Activated naive CD4-positive, alpha-beta T cell treated with anti-CD3 and anti-CD28 coated beads for 36 hours (primary cell): ENCODE measurements at regions of chr1 and their contacts with region 1.

Region 1: DNA sequence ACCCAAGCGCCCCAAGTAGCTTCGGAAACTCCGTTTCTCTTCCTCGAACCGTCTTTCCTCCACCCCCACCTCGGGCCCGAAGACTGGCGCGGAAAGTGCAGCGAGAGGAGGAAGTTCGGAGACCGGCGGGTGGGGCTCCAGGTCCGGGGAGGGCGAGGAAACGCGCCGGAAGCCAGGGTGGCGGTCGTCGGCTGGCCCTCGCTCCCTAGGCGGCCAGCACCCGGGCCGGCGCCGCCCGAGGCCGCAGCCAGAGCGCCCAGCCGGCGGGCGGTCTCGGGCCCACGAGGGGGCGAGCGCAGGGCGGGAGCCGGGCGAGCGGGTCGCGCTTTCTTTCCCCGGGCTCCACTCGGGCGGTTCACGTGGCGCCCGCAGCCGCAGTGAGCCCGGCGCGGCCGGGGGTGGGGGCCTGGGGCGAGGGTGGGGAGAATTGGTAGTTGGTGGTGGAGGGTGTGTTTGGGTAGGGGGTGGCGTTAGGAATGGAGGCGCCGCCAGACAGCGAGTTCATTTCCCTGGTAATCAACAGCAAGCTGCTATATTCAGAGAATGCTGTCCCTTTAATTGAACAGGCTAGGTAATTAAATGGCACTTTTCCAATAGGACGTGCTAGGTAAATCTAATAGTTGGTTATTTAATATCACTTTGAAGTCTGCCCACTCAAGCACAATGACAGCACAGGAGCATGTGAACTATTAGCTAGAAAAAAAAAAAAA is 6.7 kb downstream of the LMO4 start:
- DNase-seq: peak; percentile 69
- H3K4me3 Mint-ChIP-seq: peak overlapping the region; percentile 72
- H3K27ac Mint-ChIP-seq: peak overlapping the region; percentile 76
- H3K4me1 Mint-ChIP-seq: peaks cover 46% of the 10 kb centered on the region
- H3K27me3 Mint-ChIP-seq: peaks cover 27% of the 10 kb centered on the region

Region 2: GRCh38 chr1:86866665-86867064 is 468.7 kb before region 1 on chr1:
- CTCF ChIA-PET with region 1: no interaction called
- intact Hi-C with region 1: no loop called
- DNase-seq: no peak
- H3K4me3 Mint-ChIP-seq: no peak overlapping the region
- H3K27ac Mint-ChIP-seq: no peak overlapping the region
- H3K4me1 Mint-ChIP-seq: peaks cover 13% of the 10 kb centered on the region
- H3K27me3 Mint-ChIP-seq: no peaks in the 10 kb centered on the region

Region 3: DNA sequence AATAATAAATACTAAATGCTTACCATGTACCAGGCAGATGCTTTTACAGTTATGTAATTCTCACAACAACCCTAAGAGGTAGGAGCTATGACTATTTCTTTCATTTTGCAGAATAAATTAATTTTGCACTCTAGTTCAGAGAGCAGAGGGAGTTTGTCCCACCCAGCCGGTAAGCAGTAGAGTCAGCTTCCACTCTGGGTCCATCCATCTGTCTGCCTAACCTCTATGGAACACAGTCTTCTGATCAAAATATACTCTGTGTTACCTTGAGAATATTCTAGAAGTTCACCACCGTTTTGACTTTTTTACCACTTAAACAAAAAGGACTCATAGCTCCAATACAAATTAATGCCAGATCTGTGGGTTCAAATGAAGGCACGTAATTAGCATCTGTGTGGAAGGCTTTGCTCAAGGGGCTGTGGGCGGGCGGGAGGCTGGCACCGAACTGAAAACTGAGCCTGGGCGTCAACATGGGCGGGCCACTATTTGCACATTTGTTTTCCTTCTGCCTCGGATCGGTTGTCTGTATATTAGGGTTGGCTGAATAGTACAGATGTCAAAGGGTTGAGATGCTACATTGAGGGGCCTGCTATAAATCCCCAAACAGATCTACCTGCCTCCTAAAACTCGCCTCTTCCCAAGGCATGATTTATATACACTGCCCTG is 39.8 kb before region 1 on chr1:
- CTCF ChIA-PET with region 1: no interaction called
- intact Hi-C with region 1: no loop called
- DNase-seq: no peak
- H3K4me3 Mint-ChIP-seq: no peak overlapping the region
- H3K27ac Mint-ChIP-seq: no peak overlapping the region
- H3K4me1 Mint-ChIP-seq: no peaks in the 10 kb centered on the region
- H3K27me3 Mint-ChIP-seq: peaks cover 6% of the 10 kb centered on the region

Region 4: GRCh38 chr1:87404296-87404695 is 69.0 kb after region 1 on chr1:
- CTCF ChIA-PET with region 1: no interaction called
- intact Hi-C with region 1: loop called (anchors 1 kb)
- DNase-seq: no peak
- H3K4me3 Mint-ChIP-seq: no peak overlapping the region
- H3K27ac Mint-ChIP-seq: no peak overlapping the region
- H3K4me1 Mint-ChIP-seq: peaks cover 11% of the 10 kb centered on the region
- H3K27me3 Mint-ChIP-seq: peaks cover 15% of the 10 kb centered on the region